PC-9 (cell line): ENCODE measurements at regions of chr1 and their contacts with region 1.

Region 1: DNA sequence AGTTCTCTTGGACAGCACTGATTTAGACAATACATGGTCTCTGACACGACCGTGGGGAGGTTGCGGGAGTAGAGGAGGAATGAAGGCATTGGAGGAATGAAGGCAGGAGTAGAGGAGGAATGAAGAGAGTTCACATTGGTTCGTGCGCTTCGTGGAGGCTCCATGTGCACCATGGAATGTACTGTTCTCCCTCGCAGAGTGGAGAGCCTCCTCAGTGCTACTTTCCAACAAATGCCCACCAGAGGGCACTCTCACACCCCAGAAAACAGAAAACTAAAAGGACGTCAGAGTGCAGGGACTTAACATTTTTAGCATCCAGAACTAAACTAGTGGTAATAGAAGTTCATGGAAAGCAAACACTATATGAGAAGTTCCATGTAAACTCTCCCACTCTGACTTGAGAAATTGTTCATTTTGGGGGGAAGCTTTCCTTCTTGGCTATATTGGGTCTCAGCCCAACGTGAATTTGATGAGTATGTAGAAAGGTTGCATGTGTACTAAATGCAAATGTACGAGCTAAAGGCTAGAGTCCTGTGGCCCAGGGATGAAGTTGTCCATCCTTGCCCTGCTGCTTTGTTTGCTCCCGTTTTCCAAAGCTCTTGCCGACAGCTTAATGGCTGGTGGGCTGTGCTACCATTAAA is 211.6 kb downstream of the LMX1A start:
- DNase-seq: peak in 1 of 2 experiments; percentile 56
- H3K4me3 ChIP-seq: no peak overlapping the region
- H3K27ac ChIP-seq: no peak overlapping the region
- H3K4me1 ChIP-seq: no peaks in the 10 kb centered on the region
- H3K27me3 ChIP-seq: no peaks in the 10 kb centered on the region
- CTCF ChIP-seq: peak; percentile 85

Region 2: DNA sequence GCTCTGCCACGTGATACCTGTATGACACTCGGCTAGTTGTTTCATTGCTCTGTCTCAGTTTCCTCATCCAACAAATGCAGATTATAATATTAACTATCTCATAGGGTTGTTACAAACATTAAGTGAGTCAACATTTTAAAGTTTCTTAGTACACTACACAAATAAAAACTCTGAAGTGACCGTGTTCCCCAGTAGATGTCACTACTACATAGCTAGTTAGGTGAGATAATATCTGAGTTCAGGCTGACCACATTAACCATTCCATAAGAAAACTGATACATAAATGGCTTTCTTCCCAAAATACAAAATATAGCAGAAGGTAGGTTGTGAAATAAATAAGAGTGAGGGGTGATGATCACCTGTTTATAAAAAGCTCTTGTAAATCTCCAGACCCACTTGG is 1609.1 kb before region 1 on chr1:
- CTCF ChIA-PET with region 1: no interaction called
- POLR2A ChIA-PET with region 1: no interaction called
- intact Hi-C with region 1: loop called (anchors 5 kb)
- DNase-seq: no peak
- H3K4me3 ChIP-seq: no peak overlapping the region
- H3K27ac ChIP-seq: no peak overlapping the region
- H3K4me1 ChIP-seq: no peaks in the 10 kb centered on the region
- H3K27me3 ChIP-seq: no peaks in the 10 kb centered on the region
- CTCF ChIP-seq: peak; percentile 61

Region 3: GRCh38 chr1:165129568-165130164 is 15.2 kb before region 1 on chr1:
- CTCF ChIA-PET with region 1: no interaction called
- POLR2A ChIA-PET with region 1: no interaction called
- intact Hi-C with region 1: loop called (anchors 1 kb)
- DNase-seq: peak; percentile 61 to 69
- H3K4me3 ChIP-seq: no peak overlapping the region
- H3K27ac ChIP-seq: no peak overlapping the region
- H3K4me1 ChIP-seq: no peaks in the 10 kb centered on the region
- H3K27me3 ChIP-seq: peaks cover 27% of the 10 kb centered on the region
- CTCF ChIP-seq: peak; percentile 85

Region 4: GRCh38 chr1:165288350-165289148 is 143.7 kb after region 1 on chr1:
- CTCF ChIA-PET with region 1: no interaction called
- POLR2A ChIA-PET with region 1: no interaction called
- intact Hi-C with region 1: loop called (anchors 10 kb)
- DNase-seq: no peak
- H3K4me3 ChIP-seq: no peak overlapping the region
- H3K27ac ChIP-seq: no peak overlapping the region
- H3K4me1 ChIP-seq: no peaks in the 10 kb centered on the region
- H3K27me3 ChIP-seq: no peaks in the 10 kb centered on the region
- CTCF ChIP-seq: no peak